OCI-LY7 (cell line): ENCODE measurements at regions of chr12 and their contacts with region 1.

Region 1: GRCh38 chr12:131928711-131929580 is at the start of gene PUS1:
- DNase-seq: peak; percentile 95
- H3K4me3 ChIP-seq: peak within 1 kb of the TSS; percentile 94
- H3K27ac ChIP-seq: peak within 1 kb of the TSS; percentile 65
- H3K4me1 ChIP-seq: peaks cover 28% of the 10 kb centered on the region
- CTCF ChIP-seq: no peak
- total RNA-seq, gene PUS1: 38.4 and 43.5 TPM in 2 replicates

Region 2: DNA sequence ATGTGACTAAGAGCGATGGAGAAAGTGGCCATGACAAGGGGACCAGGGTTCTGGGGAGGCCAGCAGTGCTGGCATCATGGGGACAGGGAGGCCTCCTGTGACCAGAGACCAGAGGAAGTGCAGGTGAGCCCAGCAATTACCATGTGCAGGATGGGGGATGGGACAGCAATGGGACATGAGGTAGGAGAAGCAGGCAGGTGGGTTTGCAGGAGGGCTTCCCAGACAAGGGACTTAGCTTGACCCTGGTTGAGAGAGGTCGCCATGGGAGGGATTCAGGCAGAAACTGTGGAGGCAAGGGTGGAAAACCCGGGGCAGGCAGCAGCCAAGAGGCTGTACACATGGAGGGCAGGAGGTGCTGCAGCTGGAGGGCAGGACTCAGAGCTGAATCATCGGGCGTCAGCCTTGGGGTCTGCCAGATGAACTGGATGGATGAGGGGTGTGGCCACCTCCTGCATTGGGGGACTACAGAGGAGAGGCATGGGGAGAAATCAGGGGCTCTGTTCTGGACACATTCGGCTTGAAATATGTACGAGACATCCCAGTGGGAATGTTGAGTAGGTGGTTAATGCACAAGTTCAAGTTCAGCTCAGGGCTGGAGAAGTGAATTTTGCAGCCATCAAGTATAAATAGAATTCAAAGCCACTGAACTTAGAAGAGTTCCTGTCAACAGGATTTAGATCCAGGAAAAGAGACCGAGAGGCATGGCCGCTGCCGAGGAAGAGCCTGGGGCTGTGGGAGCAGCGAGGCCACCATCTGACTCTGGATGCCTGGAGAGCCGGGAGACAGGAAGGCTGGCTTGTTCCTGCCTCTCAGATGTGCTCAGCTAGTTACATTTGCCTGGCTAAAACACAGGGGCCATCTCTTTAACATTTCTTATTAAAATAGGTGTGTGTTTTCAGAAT is 181.4 kb before region 1 on chr12:
- CTCF ChIA-PET with region 1: no interaction called
- POLR2A ChIA-PET with region 1: no interaction called
- intact Hi-C with region 1: no loop called
- DNase-seq: no peak
- H3K4me3 ChIP-seq: no peak overlapping the region
- H3K27ac ChIP-seq: no peak overlapping the region
- H3K4me1 ChIP-seq: no peaks in the 10 kb centered on the region
- CTCF ChIP-seq: no peak

Region 3: GRCh38 chr12:131882779-131883520 is 46.0 kb before region 1 on chr12:
- CTCF ChIA-PET with region 1: no interaction called
- POLR2A ChIA-PET with region 1: no interaction called
- intact Hi-C with region 1: no loop called
- DNase-seq: no peak
- H3K4me3 ChIP-seq: no peak overlapping the region
- H3K27ac ChIP-seq: no peak overlapping the region
- H3K4me1 ChIP-seq: no peaks in the 10 kb centered on the region
- CTCF ChIP-seq: no peak

Region 4: GRCh38 chr12:131894313-131894860 is 34.6 kb before region 1 on chr12 and contains the start of gene ULK1:
- CTCF ChIA-PET with region 1: no interaction called
- POLR2A ChIA-PET with region 1: no interaction called
- intact Hi-C with region 1: loop called (anchors 2 kb)
- DNase-seq: peak; percentile 90
- H3K4me3 ChIP-seq: peak within 1 kb of the TSS; percentile 71
- H3K27ac ChIP-seq: no peak within 1 kb of the TSS
- H3K4me1 ChIP-seq: peaks cover 13% of the 10 kb centered on the region
- CTCF ChIP-seq: no peak
- total RNA-seq, gene ULK1: 1.9 and 4.3 TPM in 2 replicates

Region 5: DNA sequence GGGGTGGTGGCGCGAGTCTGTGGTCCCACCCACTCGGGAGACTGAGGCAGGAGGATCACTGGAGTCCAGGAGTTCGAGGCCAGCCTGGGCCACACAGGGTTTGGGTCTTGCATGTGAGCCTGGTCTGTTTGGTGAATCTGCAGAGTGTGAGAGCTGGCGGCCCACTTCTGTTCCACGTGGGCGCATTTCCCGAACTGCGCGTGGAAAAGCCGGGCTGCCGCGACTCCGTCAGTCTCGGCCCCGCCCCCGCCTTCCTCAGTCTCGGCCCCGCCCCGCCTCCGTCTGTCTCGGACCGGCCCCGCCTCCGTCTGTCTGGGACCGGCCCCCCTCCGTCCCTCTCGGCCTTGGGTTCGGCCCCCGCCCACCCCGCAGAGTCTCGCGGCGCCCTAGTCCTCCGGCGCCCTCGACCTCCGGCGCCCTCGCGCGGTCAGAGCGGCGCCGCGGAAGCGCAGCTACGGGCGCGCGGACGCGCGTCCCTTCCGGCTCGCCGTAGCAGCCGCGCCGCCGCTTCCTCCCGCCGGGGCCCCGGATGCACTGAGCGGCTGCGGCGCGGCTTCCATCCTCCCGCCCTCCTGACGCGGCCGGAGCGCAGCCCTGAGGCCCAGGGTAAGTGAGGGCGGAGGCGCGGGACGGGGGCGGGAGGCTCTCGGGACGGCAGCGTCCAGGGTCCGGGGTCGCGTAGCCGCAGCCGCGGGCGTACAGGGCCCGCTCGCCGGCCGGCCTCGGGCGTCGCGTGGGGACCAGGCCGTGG is 20.7 kb after region 1 on chr12 and contains the start of gene EP400:
- CTCF ChIA-PET with region 1: no interaction called
- POLR2A ChIA-PET with region 1: no interaction called
- intact Hi-C with region 1: loop called (anchors 1 kb)
- DNase-seq: peak; percentile 94
- H3K4me3 ChIP-seq: peak within 1 kb of the TSS; percentile 92
- H3K27ac ChIP-seq: peak within 1 kb of the TSS; percentile 55
- H3K4me1 ChIP-seq: peaks cover 7% of the 10 kb centered on the region
- CTCF ChIP-seq: peak; percentile 71
- total RNA-seq, gene EP400: 13.5 and 20.7 TPM in 2 replicates

Region 6: GRCh38 chr12:132071040-132071810 is 142.3 kb after region 1 on chr12:
- CTCF ChIA-PET with region 1: no interaction called
- POLR2A ChIA-PET with region 1: no interaction called
- intact Hi-C with region 1: loop called (anchors 10 kb)
- DNase-seq: peak; percentile 84
- H3K4me3 ChIP-seq: peak overlapping the region; percentile 54
- H3K27ac ChIP-seq: peak overlapping the region; percentile 96
- H3K4me1 ChIP-seq: peaks cover 54% of the 10 kb centered on the region
- CTCF ChIP-seq: no peak